OCI-LY7 (cell line): ENCODE measurements at regions of chr1 and their contacts with region 1.

Region 1: GRCh38 chr1:108503076-108503740 is 53.1 kb downstream of the NBPF6 start:
- DNase-seq: no peak
- H3K4me3 ChIP-seq: no peak overlapping the region
- H3K27ac ChIP-seq: no peak overlapping the region
- H3K4me1 ChIP-seq: no peaks in the 10 kb centered on the region
- CTCF ChIP-seq: no peak

Region 2: GRCh38 chr1:108590957-108591356 is 87.7 kb after region 1 on chr1:
- CTCF ChIA-PET with region 1: interaction called, 10 read pairs
- POLR2A ChIA-PET with region 1: no interaction called
- intact Hi-C with region 1: no loop called
- DNase-seq: no peak
- H3K4me3 ChIP-seq: no peak overlapping the region
- H3K27ac ChIP-seq: no peak overlapping the region
- H3K4me1 ChIP-seq: no peaks in the 10 kb centered on the region
- CTCF ChIP-seq: no peak